ENCODE measurements at regions of chr2 and their contacts with region 1.

Region 1: GRCh38 chr2:9142551-9143263 is 63.9 kb upstream of the ASAP2 start:
- DNase-seq: peak; percentile 91
- ATAC-seq: peak; percentile 93

Region 2: DNA sequence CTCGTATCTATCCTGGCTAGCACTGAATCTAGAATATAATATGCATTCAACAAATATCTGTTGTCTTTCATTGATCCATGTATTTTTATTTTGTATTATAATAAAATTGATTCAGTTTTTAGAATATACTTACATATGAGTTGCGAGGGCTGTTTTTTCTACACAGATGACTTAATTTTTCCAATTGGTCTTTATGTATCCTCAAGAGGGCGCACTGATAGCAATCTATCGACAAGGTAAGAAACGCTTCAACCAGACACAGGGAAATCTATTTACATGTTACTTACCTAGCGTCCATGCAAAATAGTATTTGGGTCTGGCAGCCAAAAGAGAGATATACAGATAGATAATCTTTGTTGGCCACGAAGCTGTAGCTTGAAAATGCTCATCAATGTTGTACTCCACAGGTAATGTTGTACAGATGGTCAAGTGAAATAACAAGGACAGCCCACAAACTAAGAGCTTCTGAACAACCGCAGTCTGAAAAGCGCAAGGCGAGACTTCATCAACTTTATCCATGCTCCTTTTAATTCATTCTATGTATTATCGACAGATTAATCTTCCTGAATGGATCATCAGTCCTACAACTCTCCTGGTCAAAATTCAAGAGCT is 269.8 kb before region 1 on chr2:
- intact Hi-C with region 1: loop called (anchors 2 kb)
- DNase-seq: no peak
- ATAC-seq: no peak

Region 3: DNA sequence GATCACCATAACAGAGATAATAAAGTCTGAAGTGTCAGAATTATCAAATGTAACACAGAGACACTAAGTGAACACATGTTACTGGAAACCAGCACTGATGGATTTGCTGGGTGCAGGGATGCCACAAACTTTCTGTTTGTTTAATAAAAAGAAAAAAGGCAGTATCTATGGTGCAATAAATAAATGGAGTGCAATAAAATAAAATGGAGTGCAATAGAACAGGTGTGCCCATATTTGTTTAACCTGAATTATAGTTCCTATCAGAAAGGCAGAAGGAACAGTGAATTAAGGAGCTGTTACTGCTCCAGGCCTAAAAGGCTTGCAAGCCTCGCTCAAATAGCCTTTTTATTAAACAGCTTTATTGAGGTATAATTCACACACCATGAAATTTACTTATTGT is 224.3 kb before region 1 on chr2:
- intact Hi-C with region 1: no loop called
- DNase-seq: no peak
- ATAC-seq: no peak

Region 4: GRCh38 chr2:9205963-9206948 is 63.5 kb after region 1 on chr2 and contains the start of gene ASAP2:
- intact Hi-C with region 1: loop called (anchors 2 kb)
- DNase-seq: peak; percentile 91
- ATAC-seq: peak; percentile 78
- total RNA-seq, gene ASAP2: 12.9 TPM

Region 5: DNA sequence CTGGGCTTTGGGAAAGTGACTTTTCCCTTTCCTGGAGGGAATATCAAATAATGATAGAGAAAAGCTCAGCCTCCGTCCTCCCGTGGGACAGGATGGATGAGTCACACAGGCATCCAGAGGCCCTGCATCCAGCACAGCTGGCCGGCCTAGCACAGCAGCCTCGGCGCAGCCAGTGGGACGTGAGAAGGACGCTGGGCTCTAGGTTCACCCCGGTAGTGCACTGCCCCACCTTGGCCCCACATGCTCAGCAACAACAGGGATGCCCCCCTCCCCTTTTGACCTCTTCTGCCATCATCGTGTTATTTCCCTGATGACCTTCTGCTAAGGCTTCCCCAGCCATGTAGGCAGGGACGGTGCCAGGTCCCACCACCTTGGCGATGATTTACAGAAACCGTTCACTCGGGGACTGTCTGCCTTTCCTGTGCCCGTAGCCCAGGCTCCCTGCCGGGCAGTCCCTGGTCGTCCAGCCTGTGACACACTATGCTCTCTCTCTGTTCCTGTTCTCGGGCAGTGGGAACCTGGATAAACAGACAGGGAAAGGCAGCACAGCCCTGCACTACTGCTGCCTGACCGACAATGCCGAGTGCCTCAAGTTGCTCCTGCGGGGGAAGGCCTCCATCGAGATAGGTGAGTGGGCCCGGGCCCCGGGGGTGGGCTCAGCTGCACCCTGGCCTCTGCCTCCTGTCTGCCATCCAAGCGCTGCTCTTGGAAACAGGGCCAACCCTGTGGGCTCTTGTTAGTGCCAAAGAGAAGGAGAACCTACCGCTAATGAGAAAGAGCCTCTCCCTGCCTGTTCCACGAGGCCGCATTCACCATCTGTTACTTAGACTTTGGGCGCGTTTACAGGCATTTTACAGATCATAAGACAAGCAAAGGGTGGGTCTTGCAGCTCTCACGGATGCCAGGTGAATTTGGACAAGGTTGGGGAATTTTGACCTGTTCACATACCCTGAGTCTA is 236.0 kb after region 1 on chr2:
- intact Hi-C with region 1: loop called (anchors 10 kb)
- DNase-seq: peak; percentile 88
- ATAC-seq: peak; percentile 85